Caco-2 (cell line): ENCODE measurements at regions of chr1 and their contacts with region 1.

Region 1: GRCh38 chr1:91885716-91886506 is at the start of gene TGFBR3:
- DNase-seq: peak; percentile 77 to 83
- H3K4me3 ChIP-seq: peak within 1 kb of the TSS; percentile 83
- H3K4me3 Mint-ChIP-seq: peak within 1 kb of the TSS; percentile 83
- H3K27ac Mint-ChIP-seq: peak within 1 kb of the TSS; percentile 13
- H3K4me1 ChIP-seq: no peaks in the 10 kb centered on the region
- H3K4me1 Mint-ChIP-seq: peaks cover 7% of the 10 kb centered on the region
- H3K27me3 ChIP-seq: no peaks in the 10 kb centered on the region
- H3K27me3 Mint-ChIP-seq: no peaks in the 10 kb centered on the region
- CTCF ChIP-seq: peak; percentile 14 to 22
- total RNA-seq, gene TGFBR3: 12.2 and 15.2 TPM in 2 replicates

Region 2: GRCh38 chr1:91827087-91827458 is 58.8 kb before region 1 on chr1:
- CTCF ChIA-PET with region 1: no interaction called
- POLR2A ChIA-PET with region 1: no interaction called
- intact Hi-C with region 1: loop called (anchors 5 kb)
- DNase-seq: peak in 1 of 2 experiments; percentile 30
- H3K4me3 ChIP-seq: no peak overlapping the region
- H3K4me3 Mint-ChIP-seq: no peak overlapping the region
- H3K27ac Mint-ChIP-seq: peak overlapping the region; percentile 48
- H3K4me1 ChIP-seq: peaks cover 15% of the 10 kb centered on the region
- H3K4me1 Mint-ChIP-seq: no peaks in the 10 kb centered on the region
- H3K27me3 ChIP-seq: no peaks in the 10 kb centered on the region
- H3K27me3 Mint-ChIP-seq: no peaks in the 10 kb centered on the region
- CTCF ChIP-seq: no peak

Region 3: GRCh38 chr1:91924146-91924545 is 38.2 kb after region 1 on chr1:
- CTCF ChIA-PET with region 1: no interaction called
- POLR2A ChIA-PET with region 1: no interaction called
- intact Hi-C with region 1: no loop called
- DNase-seq: no peak
- H3K4me3 ChIP-seq: no peak overlapping the region
- H3K4me3 Mint-ChIP-seq: no peak overlapping the region
- H3K27ac Mint-ChIP-seq: no peak overlapping the region
- H3K4me1 ChIP-seq: no peaks in the 10 kb centered on the region
- H3K4me1 Mint-ChIP-seq: peaks cover 3% of the 10 kb centered on the region
- H3K27me3 ChIP-seq: no peaks in the 10 kb centered on the region
- H3K27me3 Mint-ChIP-seq: no peaks in the 10 kb centered on the region
- CTCF ChIP-seq: no peak